ENCODE measurements at regions of chr5 and their contacts with region 1.

Region 1: GRCh38 chr5:166823360-166823759 is 1468.1 kb upstream of the WWC1 start:
- DNase-seq: no peak
- ATAC-seq: no peak

Region 2: DNA sequence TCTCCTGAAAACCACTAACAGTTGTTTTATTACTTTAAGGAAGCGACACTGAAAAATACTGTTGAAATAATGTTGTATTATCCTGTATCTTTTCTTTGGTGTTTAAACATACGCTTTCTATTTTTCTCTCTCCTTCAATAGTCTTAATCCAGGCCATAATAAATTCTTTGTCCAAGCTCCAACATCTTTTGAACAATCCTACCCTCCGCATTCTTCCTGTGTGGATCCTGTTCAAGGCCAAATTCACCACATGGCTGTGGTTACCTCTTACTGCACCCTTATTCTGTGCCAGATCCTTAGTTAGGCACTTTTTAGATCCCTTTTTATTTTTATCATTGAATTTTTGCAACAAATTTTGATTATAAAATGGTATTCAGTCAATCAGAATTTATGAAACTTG is 1626.4 kb before region 1 on chr5:
- intact Hi-C with region 1: loop called (anchors 5 kb)
- DNase-seq: no peak
- ATAC-seq: no peak

Region 3: GRCh38 chr5:166845044-166845443 is 21.7 kb after region 1 on chr5:
- intact Hi-C with region 1: no loop called
- DNase-seq: no peak
- ATAC-seq: no peak

Measured in sciatic nerve (tissue), 2 donors.